Transverse colon (tissue), 4 donors: ENCODE measurements at regions of chr1 and their contacts with region 1.

Region 1: DNA sequence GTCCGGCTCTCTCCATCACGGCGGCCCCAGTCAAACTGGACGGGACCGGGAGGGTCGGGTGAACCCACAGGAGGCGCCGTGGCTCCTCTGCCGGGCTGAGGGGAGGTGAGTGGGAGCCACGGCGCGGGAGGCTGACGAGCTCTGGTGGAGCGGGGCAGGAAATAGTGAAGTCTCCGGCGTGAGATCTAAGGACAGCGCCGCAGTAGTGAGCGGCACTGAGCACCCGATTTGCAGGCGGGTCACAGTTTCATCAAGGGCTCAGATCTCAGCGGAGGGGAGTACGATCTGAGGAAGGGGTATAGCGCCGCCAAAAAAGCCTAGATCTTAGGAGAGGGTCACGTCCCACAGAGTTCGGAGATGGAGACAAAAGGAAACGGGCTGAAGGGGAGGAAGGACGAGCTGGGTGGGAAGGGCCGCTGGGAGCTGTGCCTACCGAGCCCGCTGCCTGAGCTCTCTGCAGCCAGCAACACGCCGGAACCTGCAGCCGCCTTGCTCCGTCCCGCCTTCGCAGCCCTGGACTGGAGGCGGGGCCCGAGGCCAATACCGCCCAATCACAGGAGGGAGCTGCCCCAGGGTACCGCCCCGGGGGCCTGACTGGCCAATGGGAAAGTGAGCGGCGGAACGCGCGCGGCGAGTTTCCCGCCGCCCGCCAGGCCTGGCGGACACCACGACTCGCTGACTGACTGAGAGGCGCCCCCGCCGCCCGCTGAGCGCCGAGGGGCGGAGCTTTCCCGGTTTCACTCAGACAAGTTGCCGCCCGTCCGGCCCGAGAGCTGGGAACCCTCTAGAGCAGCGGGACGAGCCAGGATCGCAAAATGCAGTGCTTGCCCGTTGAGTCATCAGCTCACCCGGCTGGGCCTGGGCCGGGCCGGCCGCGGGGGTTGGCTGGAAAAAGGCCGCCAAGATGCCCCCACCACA is 1.9 kb downstream of the SFN start:
- DNase-seq: peak; percentile 98
- H3K4me3 ChIP-seq: peak overlapping the region; percentile 50 to 76 (median 54)
- H3K27ac ChIP-seq: peak overlapping the region; percentile 95 to 98 (median 97)
- H3K4me1 ChIP-seq: peaks cover 4 to 36% (median 17%) of the 10 kb centered on the region in 4 donors
- H3K27me3 ChIP-seq: no peaks in the 10 kb centered on the region
- CTCF ChIP-seq: peak in 2 of 5 experiments; percentile 7 to 10
- EP300 ChIP-seq: no peak
- POLR2A ChIP-seq: peak; percentile 92

Region 2: GRCh38 chr1:25832336-25833037 is 1032.4 kb before region 1 on chr1:
- in situ Hi-C with region 1: no loop called
- intact Hi-C with region 1: loop called (anchors 5 kb)
- DNase-seq: no peak
- H3K4me3 ChIP-seq: no peak overlapping the region
- H3K27ac ChIP-seq: no peak overlapping the region
- H3K4me1 ChIP-seq: no peaks in the 10 kb centered on the region
- H3K27me3 ChIP-seq: no peaks in the 10 kb centered on the region
- CTCF ChIP-seq: no peak
- EP300 ChIP-seq: no peak
- POLR2A ChIP-seq: no peak

Region 3: GRCh38 chr1:26723013-26723991 is 141.6 kb before region 1 on chr1:
- in situ Hi-C with region 1: no loop called
- intact Hi-C with region 1: loop called (anchors 10 kb)
- DNase-seq: peak; percentile 84
- H3K4me3 ChIP-seq: no peak overlapping the region
- H3K27ac ChIP-seq: peak overlapping the region; percentile 68 to 84 (median 73)
- H3K4me1 ChIP-seq: peaks cover 46 to 97% (median 66%) of the 10 kb centered on the region in 4 donors
- H3K27me3 ChIP-seq: no peaks in the 10 kb centered on the region
- CTCF ChIP-seq: no peak
- EP300 ChIP-seq: peak; percentile 36
- POLR2A ChIP-seq: peak; percentile 14

Region 4: DNA sequence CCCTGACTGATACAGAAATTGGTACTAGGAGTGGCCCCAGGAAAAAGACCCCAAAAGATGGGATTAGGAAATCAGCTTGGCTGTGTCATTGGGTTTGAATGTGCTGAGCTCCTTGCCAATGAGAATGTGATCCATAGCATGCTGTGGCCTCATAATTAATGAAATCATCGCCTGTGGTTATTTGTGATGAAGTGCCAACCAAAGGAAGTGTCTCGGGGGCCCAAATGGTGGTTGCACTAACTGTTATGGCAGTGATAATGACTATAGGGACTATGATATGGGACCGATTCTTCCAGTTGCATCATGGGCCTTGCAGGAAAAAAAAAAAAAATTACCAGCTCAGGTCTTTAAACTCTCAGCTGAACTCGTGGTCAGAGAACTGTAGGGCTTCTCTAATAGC is 53.8 kb before region 1 on chr1:
- in situ Hi-C with region 1: loop called in 1 of 4 experiments (anchors 5 kb)
- intact Hi-C with region 1: no loop called
- DNase-seq: no peak
- H3K4me3 ChIP-seq: no peak overlapping the region
- H3K27ac ChIP-seq: no peak overlapping the region
- H3K4me1 ChIP-seq: peaks cover 0 to 6% (median 0%) of the 10 kb centered on the region in 4 donors
- H3K27me3 ChIP-seq: no peaks in the 10 kb centered on the region
- CTCF ChIP-seq: no peak
- EP300 ChIP-seq: no peak
- POLR2A ChIP-seq: no peak